PC-9 (cell line): ENCODE measurements at regions of chrX and their contacts with region 1.

Region 1: DNA sequence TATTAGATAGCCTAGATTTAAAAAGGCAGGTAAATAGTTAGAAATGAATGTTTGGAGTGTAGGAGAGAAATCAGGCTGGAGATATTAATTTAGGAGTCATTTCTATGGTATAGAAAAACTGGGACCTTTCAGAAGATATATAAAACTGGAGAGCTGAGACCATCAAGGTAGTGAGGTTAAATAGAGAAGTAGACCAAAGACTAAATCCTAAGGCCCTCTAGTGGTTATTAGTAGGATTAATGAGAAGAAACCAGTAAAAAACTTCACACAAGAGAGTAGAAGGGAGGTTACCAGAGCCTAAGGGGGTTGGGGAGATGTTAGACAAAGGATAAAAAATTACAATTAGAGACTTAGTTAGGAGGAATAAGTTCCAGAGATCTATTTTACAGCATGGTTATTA is 351.0 kb upstream of the SPANXN1 start:
- DNase-seq: no peak
- H3K4me3 ChIP-seq: no peak overlapping the region
- H3K27ac ChIP-seq: no peak overlapping the region
- H3K4me1 ChIP-seq: no peaks in the 10 kb centered on the region
- H3K27me3 ChIP-seq: no peaks in the 10 kb centered on the region
- CTCF ChIP-seq: peak; percentile 66

Region 2: DNA sequence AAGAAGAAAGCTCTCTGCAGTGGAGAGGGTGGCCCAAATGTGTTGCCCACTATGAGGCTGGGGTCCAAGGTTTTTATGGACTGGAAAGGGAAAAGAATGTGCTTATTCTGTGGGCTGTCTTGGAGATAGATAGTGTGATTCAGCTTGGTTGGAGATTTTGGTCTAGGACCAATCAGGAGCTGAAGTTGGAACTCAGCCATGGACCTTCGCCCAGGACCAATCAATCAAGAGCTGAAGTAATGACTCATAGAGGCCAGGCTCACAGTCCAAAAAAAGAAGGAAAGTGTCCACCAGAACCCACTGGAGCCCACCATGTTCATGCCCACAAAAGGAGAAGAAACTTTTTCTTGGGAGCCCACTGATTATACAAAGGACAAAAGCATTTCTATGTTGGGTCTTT is 643.0 kb before region 1 on chrX:
- CTCF ChIA-PET with region 1: no interaction called
- POLR2A ChIA-PET with region 1: no interaction called
- intact Hi-C with region 1: no loop called
- DNase-seq: no peak
- H3K4me3 ChIP-seq: no peak overlapping the region
- H3K27ac ChIP-seq: no peak overlapping the region
- H3K4me1 ChIP-seq: no peaks in the 10 kb centered on the region
- H3K27me3 ChIP-seq: no peaks in the 10 kb centered on the region
- CTCF ChIP-seq: no peak

Region 3: DNA sequence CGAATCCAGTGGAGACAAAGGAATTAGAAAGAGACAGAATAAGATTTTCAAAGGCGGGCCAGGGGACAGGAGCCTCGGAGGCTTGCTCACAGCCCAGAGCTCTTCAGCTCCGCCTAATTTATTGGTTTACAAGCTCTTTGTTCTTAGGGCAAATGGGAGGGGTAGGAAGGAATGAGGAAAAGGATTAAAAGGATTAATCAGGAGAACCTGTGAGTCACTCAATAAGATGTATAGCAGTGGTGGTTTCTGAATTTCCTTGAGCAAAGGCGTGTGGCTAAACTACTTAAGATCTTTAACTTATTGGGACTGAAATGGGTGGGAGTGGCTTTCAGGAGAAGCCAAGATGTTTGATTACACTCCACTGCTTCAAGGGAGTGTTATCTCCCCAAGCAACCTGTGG is 105.0 kb before region 1 on chrX:
- CTCF ChIA-PET with region 1: interaction called, 3 read pairs
- POLR2A ChIA-PET with region 1: no interaction called
- intact Hi-C with region 1: loop called (anchors 1 kb)
- DNase-seq: peak; percentile 35 to 78
- H3K4me3 ChIP-seq: 0 out of 2 replicates have a peak overlapping the region, but pooled peaks have one; percentile 10
- H3K27ac ChIP-seq: peak overlapping the region; percentile 83
- H3K4me1 ChIP-seq: peaks cover 9% of the 10 kb centered on the region
- H3K27me3 ChIP-seq: no peaks in the 10 kb centered on the region
- CTCF ChIP-seq: no peak

Region 4: GRCh38 chrX:144849141-144849540 is 47.2 kb before region 1 on chrX:
- CTCF ChIA-PET with region 1: no interaction called
- POLR2A ChIA-PET with region 1: no interaction called
- intact Hi-C with region 1: no loop called
- DNase-seq: no peak
- H3K4me3 ChIP-seq: no peak overlapping the region
- H3K27ac ChIP-seq: no peak overlapping the region
- H3K4me1 ChIP-seq: no peaks in the 10 kb centered on the region
- H3K27me3 ChIP-seq: no peaks in the 10 kb centered on the region
- CTCF ChIP-seq: no peak